IMR-90 (cell line): ENCODE measurements at regions of chr18 and their contacts with region 1.

Region 1: GRCh38 chr18:21270453-21270852 is 28.4 kb downstream of the GREB1L start:
- DNase-seq: no peak
- ATAC-seq: no peak
- H3K4me3 ChIP-seq: no peak overlapping the region
- H3K27ac ChIP-seq: no peak overlapping the region
- H3K4me1 ChIP-seq: no peaks in the 10 kb centered on the region
- H3K27me3 ChIP-seq: peaks cover 3% of the 10 kb centered on the region; the same call in 1 of the 2 replicates
- CTCF ChIP-seq: no peak
- POLR2A ChIP-seq: no peak
- RAD21 ChIP-seq: no peak

Region 2: GRCh38 chr18:21074336-21075323 is 195.8 kb before region 1 on chr18:
- CTCF ChIA-PET with region 1: no interaction called
- POLR2A ChIA-PET with region 1: no interaction called
- dilution Hi-C with region 1: no loop called
- in situ Hi-C with region 1: no loop called
- intact Hi-C with region 1: no loop called
- DNase-seq: no peak
- ATAC-seq: no peak
- H3K4me3 ChIP-seq: no peak overlapping the region
- H3K27ac ChIP-seq: no peak overlapping the region
- H3K4me1 ChIP-seq: no peaks in the 10 kb centered on the region
- H3K27me3 ChIP-seq: no peaks in the 10 kb centered on the region
- CTCF ChIP-seq: no peak
- POLR2A ChIP-seq: no peak
- RAD21 ChIP-seq: no peak

Region 3: GRCh38 chr18:21257386-21257785 is 13.1 kb before region 1 on chr18:
- CTCF ChIA-PET with region 1: no interaction called
- POLR2A ChIA-PET with region 1: interaction called, 16 read pairs
- dilution Hi-C with region 1: no loop called
- in situ Hi-C with region 1: no loop called
- intact Hi-C with region 1: no loop called
- DNase-seq: peak; percentile 2
- ATAC-seq: peak; percentile 57
- H3K4me3 ChIP-seq: no peak overlapping the region
- H3K27ac ChIP-seq: no peak overlapping the region
- H3K4me1 ChIP-seq: no peaks in the 10 kb centered on the region
- H3K27me3 ChIP-seq: no peaks in the 10 kb centered on the region; the same call in none of the 2 replicates
- CTCF ChIP-seq: no peak
- POLR2A ChIP-seq: no peak
- RAD21 ChIP-seq: no peak

Region 4: DNA sequence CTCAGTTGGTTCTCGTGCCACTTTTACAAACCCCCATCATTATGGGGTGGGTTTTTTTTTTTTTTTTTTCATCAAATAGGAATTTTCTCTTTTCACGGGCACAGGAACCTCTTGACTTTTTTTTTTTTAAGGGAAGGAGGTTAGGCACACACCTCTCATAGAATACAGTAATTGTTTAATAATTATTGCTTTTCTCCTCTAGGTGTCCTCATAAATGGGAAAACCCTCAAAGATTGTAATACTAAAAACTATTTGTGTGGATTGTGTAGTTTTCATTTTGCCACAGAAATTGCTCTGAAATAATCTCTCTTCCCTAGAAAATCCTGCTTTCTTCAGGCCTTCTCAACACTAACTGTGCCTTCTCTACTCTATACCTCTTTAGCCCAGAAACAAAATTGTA is 118.8 kb after region 1 on chr18:
- CTCF ChIA-PET with region 1: no interaction called
- POLR2A ChIA-PET with region 1: no interaction called
- dilution Hi-C with region 1: no loop called
- in situ Hi-C with region 1: no loop called
- intact Hi-C with region 1: loop called (anchors 10 kb)
- DNase-seq: no peak
- ATAC-seq: no peak
- H3K4me3 ChIP-seq: no peak overlapping the region
- H3K27ac ChIP-seq: no peak overlapping the region
- H3K4me1 ChIP-seq: no peaks in the 10 kb centered on the region
- H3K27me3 ChIP-seq: no peaks in the 10 kb centered on the region; the same call in none of the 2 replicates
- CTCF ChIP-seq: no peak
- POLR2A ChIP-seq: no peak
- RAD21 ChIP-seq: no peak

Region 5: DNA sequence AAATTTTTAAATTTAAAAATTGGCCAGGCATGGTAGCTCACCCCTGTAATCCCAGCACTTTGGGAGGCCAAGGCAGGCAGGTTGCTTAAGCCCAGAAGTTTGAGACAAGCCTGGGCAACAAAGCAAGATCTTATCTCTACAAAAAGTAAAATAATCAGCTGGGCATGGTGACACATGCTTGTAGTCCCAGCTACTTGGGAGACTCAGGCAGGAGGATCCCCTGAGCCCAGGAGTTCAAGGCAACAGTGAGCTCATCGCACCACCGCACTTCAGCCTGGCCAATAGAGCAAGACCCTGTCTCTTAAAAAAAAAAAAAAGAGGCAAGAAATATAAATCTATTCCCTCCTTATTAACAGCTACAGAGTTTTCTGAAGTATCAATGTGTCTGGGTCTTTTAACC is 278.2 kb after region 1 on chr18:
- CTCF ChIA-PET with region 1: no interaction called
- POLR2A ChIA-PET with region 1: no interaction called
- dilution Hi-C with region 1: no loop called
- in situ Hi-C with region 1: no loop called
- intact Hi-C with region 1: no loop called
- DNase-seq: no peak
- ATAC-seq: no peak
- H3K4me3 ChIP-seq: no peak overlapping the region
- H3K27ac ChIP-seq: no peak overlapping the region
- H3K4me1 ChIP-seq: no peaks in the 10 kb centered on the region
- H3K27me3 ChIP-seq: no peaks in the 10 kb centered on the region
- CTCF ChIP-seq: no peak
- POLR2A ChIP-seq: no peak
- RAD21 ChIP-seq: no peak